H1 (cell line): ENCODE measurements at regions of chr10 and their contacts with region 1.

Region 1: GRCh38 chr10:13348216-13349017 is at the start of gene SEPHS1:
- DNase-seq: peak; percentile 54 to 79
- H3K4me3 ChIP-seq: peak within 1 kb of the TSS; percentile 65 to 87 (median 78)
- H3K27ac ChIP-seq: peak within 1 kb of the TSS; percentile 96
- H3K4me1 ChIP-seq: peaks cover 17 to 45% (median 29%) of the 10 kb centered on the region in 4 experiments
- H3K27me3 ChIP-seq: no peaks in the 10 kb centered on the region
- CTCF ChIP-seq: no peak
- EP300 ChIP-seq: no peak
- POLR2A ChIP-seq: peak; percentile 41 to 65
- RAD21 ChIP-seq: no peak
- total RNA-seq, gene SEPHS1: 633 and 683 TPM in 2 replicates

Region 2: DNA sequence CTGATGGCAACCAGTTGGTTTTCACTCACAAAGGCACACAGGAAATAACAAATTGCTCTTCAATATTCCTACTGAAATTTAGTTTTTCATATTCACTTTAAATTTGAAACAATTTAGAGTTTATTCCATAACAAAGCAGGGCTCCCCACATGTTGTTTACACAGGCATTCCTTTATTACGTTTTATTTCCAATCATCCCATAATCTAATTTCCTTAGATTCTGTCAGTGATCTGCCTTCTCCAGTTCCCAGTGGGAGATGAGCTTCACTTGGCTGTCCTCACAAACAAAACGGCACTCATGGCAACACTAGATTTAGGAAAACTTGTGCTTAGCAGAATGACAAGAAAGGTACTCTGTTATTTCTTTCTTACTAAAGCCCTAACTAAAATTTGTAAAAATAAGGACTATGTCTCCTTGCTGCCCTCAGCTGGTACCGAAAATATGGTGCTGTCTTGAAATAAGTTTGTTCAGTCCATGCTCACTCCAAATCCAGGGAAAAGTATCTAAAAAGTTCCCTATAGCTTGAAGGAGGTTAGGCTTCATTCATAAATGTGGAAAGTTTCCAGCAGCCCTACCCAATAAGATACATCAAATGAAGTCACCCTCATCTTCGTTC is 71.6 kb before region 1 on chr10:
- CTCF ChIA-PET with region 1: interaction called, 12 read pairs
- POLR2A ChIA-PET with region 1: interaction called, 12 read pairs
- DNase-seq: no peak
- H3K4me3 ChIP-seq: no peak overlapping the region
- H3K27ac ChIP-seq: no peak overlapping the region
- H3K4me1 ChIP-seq: peaks cover 0 to 5% (median 2%) of the 10 kb centered on the region in 4 experiments; a peak in 3 of 7 replicates
- H3K27me3 ChIP-seq: no peaks in the 10 kb centered on the region; a peak in 1 of 7 replicates
- CTCF ChIP-seq: peak in 1 of 3 experiments; percentile 14; a peak in 1 of 4 replicates
- EP300 ChIP-seq: no peak
- POLR2A ChIP-seq: no peak
- RAD21 ChIP-seq: peak; percentile 11 to 20; a peak in 1 of 4 replicates

Region 3: GRCh38 chr10:13317474-13317873 is 30.9 kb before region 1 on chr10:
- CTCF ChIA-PET with region 1: interaction called, 7 read pairs
- POLR2A ChIA-PET with region 1: interaction called, 37 read pairs
- DNase-seq: no peak
- H3K4me3 ChIP-seq: no peak overlapping the region
- H3K27ac ChIP-seq: no peak overlapping the region
- H3K4me1 ChIP-seq: peaks cover 0 to 2% (median 0%) of the 10 kb centered on the region in 4 experiments; a peak in 1 of 7 replicates
- H3K27me3 ChIP-seq: no peaks in the 10 kb centered on the region
- CTCF ChIP-seq: no peak
- EP300 ChIP-seq: no peak
- POLR2A ChIP-seq: peak in 1 of 2 experiments; percentile 40; a peak in 1 of 3 replicates
- RAD21 ChIP-seq: no peak

Region 4: DNA sequence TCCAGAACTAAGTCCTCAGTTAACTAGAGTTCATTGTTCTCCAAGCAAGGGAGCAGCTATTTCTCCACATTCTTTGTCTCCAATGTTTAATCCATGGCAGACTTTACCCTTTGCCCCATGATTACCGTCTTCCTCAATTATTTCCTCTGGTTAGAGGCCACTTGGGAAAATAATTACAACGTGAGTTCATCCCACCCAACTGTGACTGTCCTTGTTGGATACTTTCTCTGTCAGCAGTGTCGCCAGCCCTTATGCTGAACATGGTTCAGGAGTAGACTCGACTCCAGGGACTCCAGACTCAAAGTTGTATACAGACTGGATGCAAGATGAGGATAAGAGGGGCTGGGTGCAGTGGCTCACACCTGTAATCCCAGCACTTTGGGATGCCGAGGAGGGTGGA is 16.8 kb after region 1 on chr10:
- CTCF ChIA-PET with region 1: interaction called, 26 read pairs
- POLR2A ChIA-PET with region 1: interaction called, 77 read pairs
- DNase-seq: no peak
- H3K4me3 ChIP-seq: no peak overlapping the region
- H3K27ac ChIP-seq: no peak overlapping the region
- H3K4me1 ChIP-seq: no peaks in the 10 kb centered on the region
- H3K27me3 ChIP-seq: no peaks in the 10 kb centered on the region
- CTCF ChIP-seq: no peak
- EP300 ChIP-seq: no peak
- POLR2A ChIP-seq: no peak
- RAD21 ChIP-seq: no peak

Region 5: DNA sequence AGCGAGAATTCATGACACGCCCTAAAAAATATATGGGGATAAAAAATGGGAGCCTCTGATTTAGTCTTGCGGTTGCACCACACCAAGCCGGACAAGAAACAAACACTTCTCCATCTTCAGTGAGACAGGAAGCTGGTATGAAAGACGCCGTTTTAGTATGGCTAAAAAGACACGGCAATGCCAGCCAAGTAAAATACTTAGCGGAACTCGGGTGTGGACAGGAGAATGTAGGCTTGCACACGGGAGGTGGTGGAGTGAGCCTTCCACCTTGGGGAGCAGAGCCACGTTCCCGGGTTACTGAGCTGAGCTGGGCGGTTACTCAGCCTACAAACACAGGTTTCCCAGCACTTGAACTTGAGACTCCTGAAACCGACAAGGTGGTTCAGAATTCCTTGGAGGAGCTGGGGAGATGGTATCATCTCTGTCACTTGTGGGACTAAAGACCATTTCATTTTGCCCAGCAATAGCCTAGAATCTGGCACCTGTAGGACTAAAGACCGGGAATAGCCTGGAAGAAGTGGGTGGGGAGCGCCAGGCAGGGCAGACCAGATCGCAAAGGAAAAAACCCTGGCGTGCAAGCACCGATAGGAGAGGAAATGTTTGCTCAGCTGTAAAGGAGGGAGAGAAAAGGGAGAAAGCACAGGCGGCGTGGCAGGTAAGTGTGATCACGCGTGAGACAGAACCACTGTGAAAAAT is 34.4 kb after region 1 on chr10:
- CTCF ChIA-PET with region 1: interaction called, 3 read pairs
- POLR2A ChIA-PET with region 1: interaction called, 23 read pairs
- DNase-seq: no peak
- H3K4me3 ChIP-seq: peak overlapping the region; percentile 29 to 60 (median 50)
- H3K27ac ChIP-seq: no peak overlapping the region
- H3K4me1 ChIP-seq: peaks cover 0 to 4% (median under 1%) of the 10 kb centered on the region in 4 experiments; a peak in 4 of 7 replicates
- H3K27me3 ChIP-seq: peaks cover 0 to 10% (median 8%) of the 10 kb centered on the region in 4 experiments; a peak in 3 of 7 replicates
- CTCF ChIP-seq: no peak
- EP300 ChIP-seq: no peak
- POLR2A ChIP-seq: no peak
- RAD21 ChIP-seq: no peak

Region 6: GRCh38 chr10:13404305-13404759 is 55.9 kb after region 1 on chr10:
- CTCF ChIA-PET with region 1: interaction called, 5 read pairs
- POLR2A ChIA-PET with region 1: interaction called, 15 read pairs
- DNase-seq: no peak
- H3K4me3 ChIP-seq: no peak overlapping the region
- H3K27ac ChIP-seq: no peak overlapping the region
- H3K4me1 ChIP-seq: peaks cover 0 to 7% (median under 1%) of the 10 kb centered on the region in 4 experiments; a peak in 3 of 7 replicates
- H3K27me3 ChIP-seq: no peaks in the 10 kb centered on the region
- CTCF ChIP-seq: no peak
- EP300 ChIP-seq: no peak
- POLR2A ChIP-seq: no peak
- RAD21 ChIP-seq: no peak

Region 7: GRCh38 chr10:13536674-13537366 is 188.4 kb after region 1 on chr10:
- CTCF ChIA-PET with region 1: interaction called, 3 read pairs
- POLR2A ChIA-PET with region 1: interaction called, 14 read pairs
- DNase-seq: peak; percentile 66 to 86
- H3K4me3 ChIP-seq: peak overlapping the region in 1 of 4 experiments; percentile 25; a peak in 3 of 8 replicates
- H3K27ac ChIP-seq: no peak overlapping the region
- H3K4me1 ChIP-seq: no peaks in the 10 kb centered on the region; a peak in 1 of 7 replicates
- H3K27me3 ChIP-seq: no peaks in the 10 kb centered on the region
- CTCF ChIP-seq: peak; percentile 80 to 94 (median 91)
- EP300 ChIP-seq: no peak
- POLR2A ChIP-seq: no peak
- RAD21 ChIP-seq: peak; percentile 85 to 89